ENCODE measurements at regions of chr12 and their contacts with region 1.

Region 1: GRCh38 chr12:76790564-76791552 is 26.9 kb downstream of the ZDHHC17 start:
- DNase-seq: peak in 2 of 9 experiments; percentile 41 to 58
- ATAC-seq: peak; percentile 52
- H3K4me3 ChIP-seq: no peak overlapping the region
- H3K4me3 Mint-ChIP-seq: no peak overlapping the region
- H3K27ac ChIP-seq: no peak overlapping the region
- H3K27ac Mint-ChIP-seq: peak overlapping the region; percentile 56
- H3K4me1 ChIP-seq: no peaks in the 10 kb centered on the region
- H3K4me1 Mint-ChIP-seq: peaks cover 34% of the 10 kb centered on the region
- H3K27me3 ChIP-seq: no peaks in the 10 kb centered on the region
- H3K27me3 Mint-ChIP-seq: no peaks in the 10 kb centered on the region
- CTCF ChIP-seq: peak; percentile 79

Region 2: DNA sequence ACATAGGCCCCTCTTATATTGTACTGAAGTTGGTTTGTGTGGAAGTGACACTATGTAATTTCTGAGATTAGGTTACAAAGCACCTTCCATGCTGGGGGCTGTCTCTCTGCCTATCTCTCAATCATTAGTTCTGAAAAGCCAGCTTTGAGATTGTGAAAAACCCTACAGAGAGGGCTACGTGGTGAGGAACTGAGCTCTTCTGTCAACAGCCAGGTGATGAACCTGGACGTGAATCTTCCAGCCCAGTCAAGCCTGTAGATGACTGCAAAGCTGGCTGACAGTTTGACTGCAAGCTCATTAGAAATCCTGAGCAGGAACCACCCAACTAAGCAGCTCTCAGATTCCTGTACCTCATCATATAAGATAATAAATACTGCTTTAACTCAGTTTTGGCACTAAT is 406.3 kb before region 1 on chr12:
- CTCF ChIA-PET with region 1: no interaction called
- POLR2A ChIA-PET with region 1: no interaction called
- intact Hi-C with region 1: loop called in 1 of 2 experiments (anchors 10 kb)
- DNase-seq: no peak
- ATAC-seq: no peak
- H3K4me3 ChIP-seq: no peak overlapping the region
- H3K4me3 Mint-ChIP-seq: no peak overlapping the region
- H3K27ac ChIP-seq: no peak overlapping the region
- H3K27ac Mint-ChIP-seq: no peak overlapping the region
- H3K4me1 ChIP-seq: no peaks in the 10 kb centered on the region
- H3K4me1 Mint-ChIP-seq: no peaks in the 10 kb centered on the region
- H3K27me3 ChIP-seq: no peaks in the 10 kb centered on the region
- H3K27me3 Mint-ChIP-seq: no peaks in the 10 kb centered on the region
- CTCF ChIP-seq: no peak

Region 3: DNA sequence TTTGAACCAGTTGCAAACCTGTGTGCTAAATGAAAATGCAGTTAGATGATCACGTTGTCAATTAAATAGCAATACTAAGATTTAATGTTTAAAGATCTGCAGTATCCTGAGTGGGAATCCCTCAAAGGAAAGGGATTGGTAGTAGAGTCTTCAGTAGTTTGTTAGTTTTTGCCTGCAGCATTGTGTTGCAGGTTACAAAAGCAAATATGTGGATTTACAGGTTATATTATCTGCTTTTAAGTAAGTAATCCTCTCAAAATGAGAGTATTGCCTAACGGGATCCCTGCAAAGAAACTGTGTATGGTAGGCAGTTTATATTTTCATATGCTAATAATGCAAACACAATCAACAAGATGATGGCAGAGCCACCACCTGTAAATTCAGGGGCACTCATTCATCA is 159.1 kb before region 1 on chr12:
- CTCF ChIA-PET with region 1: interaction called, 17 read pairs
- POLR2A ChIA-PET with region 1: no interaction called
- intact Hi-C with region 1: no loop called
- DNase-seq: no peak
- ATAC-seq: no peak
- H3K4me3 ChIP-seq: no peak overlapping the region
- H3K4me3 Mint-ChIP-seq: no peak overlapping the region
- H3K27ac ChIP-seq: no peak overlapping the region
- H3K27ac Mint-ChIP-seq: no peak overlapping the region
- H3K4me1 ChIP-seq: no peaks in the 10 kb centered on the region
- H3K4me1 Mint-ChIP-seq: no peaks in the 10 kb centered on the region
- H3K27me3 ChIP-seq: no peaks in the 10 kb centered on the region
- H3K27me3 Mint-ChIP-seq: no peaks in the 10 kb centered on the region
- CTCF ChIP-seq: no peak

Region 4: DNA sequence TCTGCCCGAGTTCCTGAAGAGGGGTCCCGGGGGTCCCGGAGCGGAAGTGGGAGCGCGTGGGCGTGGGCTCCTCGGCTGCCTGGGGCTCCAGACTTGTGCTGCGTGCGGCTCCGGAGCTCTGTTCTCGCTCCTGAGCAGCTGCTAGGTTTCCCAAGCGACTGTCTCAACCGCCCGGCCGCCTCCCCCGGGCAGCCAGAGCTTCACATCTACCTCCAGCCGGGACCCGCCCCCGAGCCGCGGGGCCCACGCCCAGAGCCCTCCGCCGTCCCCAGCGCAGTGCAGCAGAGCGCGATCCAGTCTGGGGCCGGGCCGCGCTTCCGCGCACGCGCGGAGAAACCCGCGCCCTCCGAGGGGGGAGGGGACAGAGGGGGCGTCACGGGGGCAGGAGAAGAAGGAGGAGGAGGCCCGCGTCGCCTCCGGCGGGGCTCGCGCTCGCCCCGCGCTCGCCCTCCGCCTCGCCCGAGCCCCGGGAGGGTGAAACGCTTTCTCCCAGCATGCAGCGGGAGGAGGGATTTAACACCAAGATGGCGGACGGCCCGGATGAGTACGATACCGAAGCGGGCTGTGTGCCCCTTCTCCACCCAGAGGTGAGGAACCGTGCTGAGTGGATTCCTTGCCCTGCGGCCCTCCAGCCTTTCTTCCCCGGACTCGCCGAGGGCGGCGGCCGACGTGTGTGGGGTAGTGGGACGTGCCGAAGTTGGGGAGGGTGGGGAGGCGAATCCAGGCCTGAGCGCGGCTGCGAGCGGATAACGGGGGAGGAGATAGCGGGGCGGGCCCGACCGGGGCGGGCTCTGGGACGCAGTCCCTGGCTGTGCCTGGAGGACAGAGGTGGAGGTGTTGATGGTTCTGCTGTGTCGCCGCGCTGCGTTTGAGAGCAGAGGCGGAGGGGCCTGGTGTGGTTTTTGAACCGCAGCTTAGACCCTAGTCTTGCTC is 26.8 kb before region 1 on chr12 and contains the start of gene ZDHHC17:
- CTCF ChIA-PET with region 1: interaction called, 14 read pairs
- POLR2A ChIA-PET with region 1: interaction called, 3 read pairs
- intact Hi-C with region 1: loop called in 1 of 2 experiments (anchors 2 kb)
- DNase-seq: peak; percentile 89 to 96 (median 93)
- ATAC-seq: peak; percentile 82
- H3K4me3 ChIP-seq: peak within 1 kb of the TSS; percentile 73 to 99
- H3K4me3 Mint-ChIP-seq: peak within 1 kb of the TSS; percentile 98
- H3K27ac ChIP-seq: peak within 1 kb of the TSS; percentile 87 to 94
- H3K27ac Mint-ChIP-seq: peak within 1 kb of the TSS; percentile 99
- H3K4me1 ChIP-seq: peaks cover 26% of the 10 kb centered on the region
- H3K4me1 Mint-ChIP-seq: peaks cover 47% of the 10 kb centered on the region
- H3K27me3 ChIP-seq: no peaks in the 10 kb centered on the region
- H3K27me3 Mint-ChIP-seq: no peaks in the 10 kb centered on the region
- CTCF ChIP-seq: no peak
- total RNA-seq, gene ZDHHC17: 38.1 to 40.3 TPM

Region 5: DNA sequence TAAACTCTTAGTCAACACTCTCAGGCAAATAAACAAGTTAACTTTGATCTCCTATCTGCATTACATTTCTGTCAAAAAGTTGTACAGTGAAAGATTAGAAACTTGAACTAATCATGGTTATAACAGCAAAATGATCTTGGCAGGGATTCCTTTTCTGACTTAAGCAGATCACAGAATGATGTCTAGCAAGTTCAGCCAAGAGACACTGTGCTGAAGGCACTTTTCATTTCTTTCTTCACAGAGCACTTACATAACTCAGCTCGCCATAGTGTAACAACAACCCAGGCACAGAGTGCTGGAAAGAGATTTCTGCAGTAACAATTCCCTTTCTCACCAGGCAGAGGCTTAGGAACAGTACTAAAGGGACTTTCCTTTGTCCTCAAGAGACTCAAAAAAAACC is 107.6 kb after region 1 on chr12:
- CTCF ChIA-PET with region 1: no interaction called
- POLR2A ChIA-PET with region 1: no interaction called
- intact Hi-C with region 1: no loop called
- DNase-seq: no peak
- ATAC-seq: no peak
- H3K4me3 ChIP-seq: no peak overlapping the region
- H3K4me3 Mint-ChIP-seq: no peak overlapping the region
- H3K27ac ChIP-seq: no peak overlapping the region
- H3K27ac Mint-ChIP-seq: no peak overlapping the region
- H3K4me1 ChIP-seq: peaks cover 17% of the 10 kb centered on the region
- H3K4me1 Mint-ChIP-seq: peaks cover 15% of the 10 kb centered on the region
- H3K27me3 ChIP-seq: no peaks in the 10 kb centered on the region
- H3K27me3 Mint-ChIP-seq: no peaks in the 10 kb centered on the region
- CTCF ChIP-seq: no peak

Region 6: GRCh38 chr12:77010691-77011548 is 220.1 kb after region 1 on chr12:
- CTCF ChIA-PET with region 1: interaction called, 13 read pairs
- POLR2A ChIA-PET with region 1: no interaction called
- intact Hi-C with region 1: loop called (anchors 5 kb)
- DNase-seq: peak; percentile 34 to 76 (median 59)
- ATAC-seq: peak; percentile 69
- H3K4me3 ChIP-seq: no peak overlapping the region
- H3K4me3 Mint-ChIP-seq: no peak overlapping the region
- H3K27ac ChIP-seq: no peak overlapping the region
- H3K27ac Mint-ChIP-seq: no peak overlapping the region
- H3K4me1 ChIP-seq: no peaks in the 10 kb centered on the region
- H3K4me1 Mint-ChIP-seq: peaks cover 2% of the 10 kb centered on the region
- H3K27me3 ChIP-seq: no peaks in the 10 kb centered on the region
- H3K27me3 Mint-ChIP-seq: peaks cover 2% of the 10 kb centered on the region
- CTCF ChIP-seq: peak; percentile 87